GM18951 (cell line): ENCODE measurements at regions of chr1 and their contacts with region 1.

Region 1: GRCh38 chr1:39901698-39902459 is at the start of gene MYCL:
- POLR2A ChIP-seq: peak; percentile 45

Region 2: GRCh38 chr1:39653546-39654031 is 248.3 kb before region 1 on chr1:
- in situ Hi-C with region 1: no loop called
- POLR2A ChIP-seq: no peak

Region 3: DNA sequence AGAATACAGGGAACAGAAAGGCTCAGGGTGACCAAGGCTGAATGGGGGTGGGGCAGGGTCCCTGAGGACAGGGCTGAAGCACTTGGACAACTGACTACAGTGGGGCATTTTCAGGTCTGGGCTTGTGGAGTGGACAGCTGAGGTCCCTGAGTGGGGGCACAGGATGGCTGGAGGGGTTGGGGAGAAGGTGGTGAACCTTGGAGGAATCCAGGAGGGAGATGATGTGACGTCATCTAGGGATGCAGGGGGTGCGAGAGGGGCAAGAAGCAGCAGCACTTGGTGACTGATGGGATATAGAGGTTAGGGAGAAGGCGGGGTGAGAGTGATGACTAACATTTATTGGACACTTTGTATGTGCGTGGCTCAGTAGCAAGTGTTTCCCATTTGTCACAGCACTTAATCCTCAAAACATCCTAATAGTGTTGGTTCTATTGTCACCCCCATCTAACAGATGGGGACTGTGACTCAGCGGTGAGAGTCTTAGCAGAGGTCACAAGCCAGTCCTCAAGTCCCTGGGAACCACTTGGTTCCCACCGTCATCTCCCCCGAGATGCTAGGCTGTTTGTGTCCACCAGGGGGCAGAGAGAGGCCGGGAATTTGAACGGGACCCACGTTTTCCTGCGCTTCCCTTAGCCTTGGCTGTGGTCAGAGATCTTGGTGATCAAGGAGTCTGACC is 85.3 kb before region 1 on chr1:
- in situ Hi-C with region 1: loop called (anchors 10 kb)
- POLR2A ChIP-seq: no peak

Region 4: GRCh38 chr1:39829791-39830533 is 71.9 kb before region 1 on chr1:
- in situ Hi-C with region 1: loop called (anchors 10 kb)
- POLR2A ChIP-seq: no peak

Region 5: DNA sequence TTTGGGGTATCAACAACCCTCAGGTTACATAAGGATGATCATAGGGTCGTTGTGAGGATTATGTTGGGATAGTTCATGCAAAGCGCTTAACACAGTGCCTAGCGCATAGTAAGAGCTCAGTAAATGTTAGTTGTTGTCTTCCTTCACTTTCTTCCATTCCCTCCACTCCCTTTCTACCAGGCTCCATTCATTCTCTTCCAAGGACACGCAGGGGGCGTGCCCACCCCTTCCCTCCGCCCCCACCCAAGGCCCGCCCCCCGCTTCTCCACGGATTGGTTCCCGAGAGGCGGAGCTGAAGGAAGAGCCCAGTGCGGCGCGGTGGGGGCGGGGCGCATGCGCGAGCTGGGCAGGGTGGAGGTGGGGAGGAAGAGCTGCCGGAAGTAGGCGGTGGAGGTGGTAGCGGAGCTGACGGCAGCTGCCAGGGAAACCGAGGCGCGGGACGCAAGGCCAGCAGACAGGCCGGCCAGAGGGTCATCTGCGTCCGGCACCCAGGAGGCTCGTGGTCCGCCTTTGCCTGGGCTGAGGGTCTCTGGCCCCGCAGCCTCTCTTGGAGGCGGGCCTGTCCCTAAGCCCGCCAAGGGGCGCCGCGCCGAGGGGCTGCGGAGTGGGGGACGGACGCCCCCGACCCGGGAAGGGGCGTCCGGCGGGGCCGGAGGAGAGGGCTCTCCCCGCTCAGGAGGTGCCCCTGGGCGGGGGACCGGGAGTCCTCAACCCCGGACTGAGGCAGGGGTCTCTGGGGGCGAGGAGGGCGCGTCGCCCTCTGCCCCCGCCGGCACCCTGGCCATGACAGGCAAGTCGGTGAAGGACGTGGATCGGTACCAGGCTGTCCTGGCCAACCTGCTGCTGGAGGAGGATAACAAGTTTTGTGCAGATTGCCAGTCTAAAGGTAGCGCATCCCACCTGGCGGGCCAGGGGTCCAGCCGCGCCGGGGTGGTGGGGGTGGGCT is 471.7 kb after region 1 on chr1 and contains the start of gene SMAP2:
- in situ Hi-C with region 1: no loop called
- POLR2A ChIP-seq: peak; percentile 73